ENCODE measurements at regions of chr20 and their contacts with region 1.

Region 1: DNA sequence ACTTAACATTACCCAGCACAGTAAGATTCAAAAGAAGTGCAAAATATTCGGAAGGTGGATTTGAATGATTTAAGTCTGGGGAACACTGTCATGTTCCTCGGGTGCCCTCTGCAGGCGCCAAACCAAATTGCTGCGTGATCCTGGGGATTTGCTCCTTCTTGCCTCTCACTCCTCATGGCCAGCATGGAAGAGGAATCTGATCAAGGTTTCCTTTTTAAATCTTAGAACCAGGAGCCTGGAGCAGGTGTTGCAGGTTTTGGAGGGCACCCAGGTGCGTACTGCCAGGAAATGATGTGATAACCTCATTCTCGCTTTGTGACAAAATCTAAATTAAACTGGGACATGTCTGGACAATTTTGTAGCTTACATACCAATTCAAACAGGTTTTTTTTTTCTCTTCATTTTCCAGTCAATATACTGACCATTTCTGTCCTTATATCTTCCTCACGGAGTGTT is 8.1 kb upstream of the PFDN4 start:
- DNase-seq: peak; percentile 78
- ATAC-seq: peak; percentile 76
- H3K4me3 Mint-ChIP-seq: no peak overlapping the region
- H3K27ac Mint-ChIP-seq: no peak overlapping the region
- H3K4me1 Mint-ChIP-seq: no peaks in the 10 kb centered on the region
- H3K27me3 Mint-ChIP-seq: peaks cover 4% of the 10 kb centered on the region

Region 2: DNA sequence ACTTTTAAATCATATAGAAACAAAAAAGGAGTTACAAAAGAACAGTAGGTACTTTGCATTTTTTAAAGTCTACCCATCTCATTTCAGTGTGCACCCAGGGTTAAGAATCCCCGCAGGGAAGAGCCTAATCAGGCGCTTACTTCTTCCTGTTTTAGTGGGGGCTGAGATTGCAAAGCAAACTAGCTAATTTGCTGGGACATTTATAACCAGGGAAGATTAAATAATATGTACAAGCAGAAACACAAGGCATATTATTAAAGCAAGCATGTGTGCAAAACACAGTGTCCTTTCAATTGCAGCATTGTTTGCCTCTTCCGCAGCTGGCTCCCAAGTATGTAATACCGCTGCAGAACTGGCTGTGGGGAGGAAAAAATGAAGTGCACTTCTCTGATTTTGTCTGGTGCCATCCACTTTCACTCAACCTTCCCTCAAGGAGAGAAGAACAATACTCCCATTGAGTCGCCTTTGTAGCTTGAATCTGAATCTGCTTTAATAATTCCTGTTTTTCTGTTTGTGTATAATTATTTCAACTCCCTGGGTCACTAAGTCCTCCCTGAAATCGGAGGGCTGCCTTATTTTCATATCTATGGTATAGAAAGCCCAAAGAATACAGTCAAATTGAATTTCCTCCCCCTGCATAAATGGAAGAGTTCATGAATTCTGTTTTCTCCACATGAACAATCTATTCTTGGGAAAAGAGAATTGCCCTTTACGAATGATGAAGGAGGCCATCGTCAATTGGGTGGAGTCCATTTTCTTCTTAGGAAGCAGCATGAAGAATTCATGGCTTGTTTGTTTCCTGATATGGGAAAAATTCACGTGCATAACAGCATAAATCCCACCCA is 106.1 kb before region 1 on chr20:
- CTCF ChIA-PET with region 1: interaction called, 73 read pairs
- DNase-seq: no peak
- ATAC-seq: no peak
- H3K4me3 Mint-ChIP-seq: no peak overlapping the region
- H3K27ac Mint-ChIP-seq: no peak overlapping the region
- H3K4me1 Mint-ChIP-seq: peaks cover 4% of the 10 kb centered on the region
- H3K27me3 Mint-ChIP-seq: peaks cover 7% of the 10 kb centered on the region

Region 3: DNA sequence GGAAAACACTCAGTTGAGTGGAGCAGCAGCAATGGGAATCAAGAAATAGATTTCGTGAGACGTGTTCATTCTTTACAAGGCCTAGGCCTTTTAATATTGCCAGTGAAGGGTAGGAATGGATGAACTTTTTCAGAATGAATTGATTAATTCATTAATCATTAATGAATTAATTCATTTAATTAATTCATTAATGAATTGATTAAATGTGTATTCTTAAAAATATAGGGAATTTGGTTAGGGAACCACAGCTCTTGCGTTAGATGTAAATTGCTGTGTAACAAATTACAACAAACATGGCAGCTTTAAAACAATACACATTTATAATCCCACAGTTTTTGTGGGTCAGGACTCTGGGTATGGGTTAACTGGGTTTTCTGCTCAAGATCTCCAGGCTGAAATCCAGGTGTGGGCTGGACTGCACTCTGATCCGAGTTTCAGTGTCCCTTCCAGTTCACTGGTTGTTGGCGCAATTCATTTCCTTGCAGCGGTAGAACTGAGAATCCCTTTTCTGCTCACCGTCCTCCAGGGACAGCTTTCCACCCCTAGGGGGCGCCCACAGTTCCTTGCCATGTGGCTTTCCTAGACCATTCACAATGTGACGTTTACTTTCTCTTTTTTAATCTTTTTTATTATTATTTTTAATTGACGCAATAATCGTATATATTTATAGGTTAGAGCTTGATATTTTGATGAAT is 96.5 kb before region 1 on chr20:
- CTCF ChIA-PET with region 1: interaction called, 73 read pairs
- DNase-seq: peak; percentile 84
- ATAC-seq: peak; percentile 78
- H3K4me3 Mint-ChIP-seq: no peak overlapping the region
- H3K27ac Mint-ChIP-seq: no peak overlapping the region
- H3K4me1 Mint-ChIP-seq: peaks cover 2% of the 10 kb centered on the region
- H3K27me3 Mint-ChIP-seq: peaks cover 4% of the 10 kb centered on the region

Measured in activated CD8-positive, alpha-beta memory T cell treated with anti-CD3 and anti-CD28 coated beads, Interleukin-2, amount 10 ng/mL, durations not matched to agents 7 days and 5 days (primary cell).